ENCODE measurements at regions of chr2 and their contacts with region 1.

Region 1: GRCh38 chr2:78721302-78722033 is 304.0 kb upstream of the REG3G start:
- DNase-seq: no peak
- ATAC-seq: no peak
- H3K4me3 ChIP-seq: no peak overlapping the region
- H3K27ac ChIP-seq: no peak overlapping the region
- H3K4me1 ChIP-seq: no peaks in the 10 kb centered on the region
- H3K27me3 ChIP-seq: no peaks in the 10 kb centered on the region
- CTCF ChIP-seq: no peak
- POLR2A ChIP-seq: no peak
- RAD21 ChIP-seq: no peak

Region 2: GRCh38 chr2:77142141-77142540 is 1579.3 kb before region 1 on chr2:
- CTCF ChIA-PET with region 1: no interaction called
- POLR2A ChIA-PET with region 1: no interaction called
- dilution Hi-C with region 1: no loop called
- in situ Hi-C with region 1: no loop called
- intact Hi-C with region 1: no loop called
- DNase-seq: no peak
- ATAC-seq: no peak
- H3K4me3 ChIP-seq: no peak overlapping the region
- H3K27ac ChIP-seq: no peak overlapping the region
- H3K4me1 ChIP-seq: no peaks in the 10 kb centered on the region
- H3K27me3 ChIP-seq: no peaks in the 10 kb centered on the region
- CTCF ChIP-seq: no peak
- POLR2A ChIP-seq: no peak
- RAD21 ChIP-seq: no peak

Region 3: GRCh38 chr2:78644854-78645253 is 76.6 kb before region 1 on chr2:
- CTCF ChIA-PET with region 1: no interaction called
- POLR2A ChIA-PET with region 1: no interaction called
- dilution Hi-C with region 1: no loop called
- in situ Hi-C with region 1: loop called (anchors 10 kb)
- intact Hi-C with region 1: no loop called
- DNase-seq: no peak
- ATAC-seq: no peak
- H3K4me3 ChIP-seq: no peak overlapping the region
- H3K27ac ChIP-seq: no peak overlapping the region
- H3K4me1 ChIP-seq: no peaks in the 10 kb centered on the region
- H3K27me3 ChIP-seq: no peaks in the 10 kb centered on the region
- CTCF ChIP-seq: no peak
- POLR2A ChIP-seq: no peak
- RAD21 ChIP-seq: no peak

Region 4: GRCh38 chr2:78707776-78708386 is 13.6 kb before region 1 on chr2:
- CTCF ChIA-PET with region 1: no interaction called
- POLR2A ChIA-PET with region 1: no interaction called
- dilution Hi-C with region 1: no loop called
- in situ Hi-C with region 1: no loop called
- intact Hi-C with region 1: no loop called
- DNase-seq: no peak
- ATAC-seq: no peak
- H3K4me3 ChIP-seq: no peak overlapping the region
- H3K27ac ChIP-seq: no peak overlapping the region
- H3K4me1 ChIP-seq: no peaks in the 10 kb centered on the region
- H3K27me3 ChIP-seq: no peaks in the 10 kb centered on the region
- CTCF ChIP-seq: no peak
- POLR2A ChIP-seq: no peak
- RAD21 ChIP-seq: no peak

Measured in IMR-90 (cell line).